ENCODE measurements at regions of chr12 and their contacts with region 1.

Region 1: DNA sequence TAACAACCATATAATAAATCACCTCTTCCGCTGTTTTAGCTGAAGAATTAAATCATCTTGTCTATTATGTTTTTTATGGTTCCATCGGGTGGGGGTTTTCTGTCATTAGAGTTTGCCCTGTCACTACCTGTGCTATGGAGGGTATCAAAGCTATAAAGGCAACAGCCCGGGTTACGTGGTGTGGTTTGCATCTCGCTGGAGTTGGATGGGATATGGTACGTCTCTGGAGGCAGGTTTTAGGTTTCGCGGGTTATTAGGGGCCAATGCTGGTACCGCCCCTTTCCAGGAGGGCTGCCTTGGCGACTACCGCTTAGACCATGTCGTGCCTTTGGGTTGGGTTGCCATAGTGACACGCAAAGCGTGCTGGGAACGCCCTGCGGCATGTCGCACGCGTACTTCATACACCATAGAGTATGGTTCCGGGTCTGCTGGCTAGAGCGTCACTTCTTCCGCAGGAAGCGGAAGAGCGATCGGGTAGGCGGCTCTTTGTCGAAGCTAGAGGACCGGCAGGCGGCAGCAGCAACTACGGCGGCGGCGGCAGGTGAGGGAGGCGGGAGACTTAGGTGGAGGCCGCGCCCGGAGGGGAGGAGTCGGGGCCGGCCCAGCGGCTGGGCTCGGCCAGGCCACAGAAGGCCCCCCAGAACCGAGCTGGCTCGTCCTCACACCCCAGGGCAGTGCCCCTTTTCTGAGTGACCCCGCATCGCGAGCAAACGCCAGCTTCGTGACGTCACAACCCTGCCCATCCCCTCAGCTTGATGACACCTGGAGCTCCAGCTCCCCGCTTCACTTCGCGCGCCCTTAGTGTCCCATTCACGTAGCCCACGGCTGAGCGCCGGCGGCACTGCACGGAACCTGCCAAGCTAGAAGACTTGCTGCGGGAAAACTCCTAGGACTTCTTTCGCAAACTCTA is at the start of gene ZC3H10:
- DNase-seq: peak; percentile 98
- ATAC-seq: peak; percentile 84
- H3K4me3 ChIP-seq: peak within 1 kb of the TSS; percentile 69 to 86 (median 74)
- H3K27ac ChIP-seq: peak within 1 kb of the TSS; percentile 93
- H3K4me1 ChIP-seq: peaks cover 51% of the 10 kb centered on the region
- H3K27me3 ChIP-seq: no peaks in the 10 kb centered on the region; a peak in 1 of 5 replicates
- CTCF ChIP-seq: peak; percentile 91
- EP300 ChIP-seq: peak in 1 of 2 experiments; percentile 73; a peak in 3 of 4 replicates
- POLR2A ChIP-seq: peak; percentile 99
- RAD21 ChIP-seq: peak; percentile 58
- total RNA-seq, gene ZC3H10: 1.9 and 2.3 TPM in 2 replicates

Region 2: DNA sequence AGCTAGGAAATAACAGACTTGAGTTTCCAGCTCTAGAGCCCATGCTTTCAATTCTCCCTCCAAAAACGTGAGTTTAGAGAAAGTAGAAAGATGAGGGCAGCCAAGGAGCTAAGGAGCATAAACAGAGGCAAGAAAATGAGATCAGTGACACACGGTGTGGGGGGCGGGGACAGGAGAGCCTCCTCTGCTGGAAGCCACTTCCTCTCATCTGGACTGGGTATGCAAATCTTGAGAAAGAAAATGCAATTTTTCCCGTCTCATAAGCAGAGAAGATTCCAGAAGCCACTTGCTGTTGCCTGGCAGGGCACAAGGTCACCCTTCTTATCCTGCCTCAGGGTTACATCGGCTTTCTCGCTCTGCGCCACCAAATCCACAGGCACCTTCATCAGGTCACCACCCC is 475.4 kb before region 1 on chr12:
- CTCF ChIA-PET with region 1: no interaction called
- POLR2A ChIA-PET with region 1: no interaction called
- in situ Hi-C with region 1: no loop called
- intact Hi-C with region 1: no loop called
- DNase-seq: no peak
- ATAC-seq: no peak
- H3K4me3 ChIP-seq: no peak overlapping the region
- H3K27ac ChIP-seq: no peak overlapping the region
- H3K4me1 ChIP-seq: no peaks in the 10 kb centered on the region
- H3K27me3 ChIP-seq: peaks cover 0 to 4% of the 10 kb centered on the region in 2 experiments; a peak in 1 of 5 replicates
- CTCF ChIP-seq: no peak
- EP300 ChIP-seq: no peak
- POLR2A ChIP-seq: no peak
- RAD21 ChIP-seq: no peak

Region 3: DNA sequence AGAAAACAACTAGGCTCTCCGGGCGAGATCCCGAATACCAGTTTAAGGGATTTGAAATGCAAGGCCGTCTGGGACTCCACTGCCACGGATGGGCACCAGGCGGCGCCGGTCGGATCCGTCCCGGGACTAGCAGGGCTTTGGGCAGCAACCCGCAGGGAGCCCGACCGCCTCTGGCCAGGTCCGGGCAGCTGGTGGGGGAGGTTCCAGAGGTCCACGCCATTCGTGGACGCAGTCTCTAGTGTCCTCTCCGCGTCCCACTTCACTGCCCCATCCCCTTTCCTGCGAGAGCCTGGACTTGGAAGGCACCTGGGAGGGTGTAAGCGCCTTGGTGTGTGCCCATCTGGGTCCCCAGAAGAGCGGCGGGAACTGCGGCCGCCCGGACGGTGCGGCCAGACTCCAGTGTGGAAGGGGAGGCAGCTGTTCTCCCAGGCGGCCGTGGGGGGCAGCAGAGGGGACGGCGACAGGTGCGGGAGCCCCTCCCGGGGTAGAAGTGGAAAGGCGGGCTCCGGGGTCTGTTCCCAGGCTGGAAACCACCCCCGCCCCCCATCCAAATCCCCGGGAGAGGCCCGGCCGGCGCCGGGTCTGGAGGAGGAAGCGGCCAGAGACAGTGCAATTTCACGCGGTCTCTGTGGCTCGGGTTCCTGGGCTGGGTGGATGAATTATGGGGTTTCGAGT is 38.9 kb before region 1 on chr12:
- CTCF ChIA-PET with region 1: interaction called, 4 read pairs
- POLR2A ChIA-PET with region 1: interaction called, 124 read pairs
- in situ Hi-C with region 1: no loop called
- intact Hi-C with region 1: loop called (anchors 1 kb)
- DNase-seq: peak; percentile 81
- ATAC-seq: peak; percentile 61
- H3K4me3 ChIP-seq: peak overlapping the region; percentile 89 to 96 (median 91)
- H3K27ac ChIP-seq: peak overlapping the region; percentile 99
- H3K4me1 ChIP-seq: peaks cover 49% of the 10 kb centered on the region
- H3K27me3 ChIP-seq: no peaks in the 10 kb centered on the region; a peak in 1 of 5 replicates
- CTCF ChIP-seq: peak; percentile 83
- EP300 ChIP-seq: 0 out of 4 replicates have a peak, but pooled peaks of 1 of the 2 experiments have one; percentile 22
- POLR2A ChIP-seq: peak; percentile 67 to 73; a peak in 3 of 4 replicates
- RAD21 ChIP-seq: peak; percentile 80

Region 4: GRCh38 chr12:56127888-56128669 is 10.0 kb after region 1 on chr12 and contains the start of gene ESYT1:
- CTCF ChIA-PET with region 1: no interaction called
- POLR2A ChIA-PET with region 1: interaction called, 58 read pairs
- in situ Hi-C with region 1: no loop called
- intact Hi-C with region 1: no loop called
- DNase-seq: peak; percentile 100
- ATAC-seq: peak; percentile 90
- H3K4me3 ChIP-seq: peak within 1 kb of the TSS; percentile 72 to 89 (median 83)
- H3K27ac ChIP-seq: peak within 1 kb of the TSS; percentile 65
- H3K4me1 ChIP-seq: peaks cover 61% of the 10 kb centered on the region
- H3K27me3 ChIP-seq: no peaks in the 10 kb centered on the region
- CTCF ChIP-seq: peak; percentile 42
- EP300 ChIP-seq: no peak
- POLR2A ChIP-seq: peak; percentile 90 to 96
- RAD21 ChIP-seq: 0 out of 2 replicates have a peak, but pooled peaks have one; percentile 11
- total RNA-seq, gene ESYT1: 30.1 and 66.9 TPM in 2 replicates

Region 5: GRCh38 chr12:56158029-56158925 is 40.2 kb after region 1 on chr12 and contains the start of gene MYL6:
- CTCF ChIA-PET with region 1: no interaction called
- POLR2A ChIA-PET with region 1: interaction called, 24 read pairs
- in situ Hi-C with region 1: loop called (anchors 5 kb)
- intact Hi-C with region 1: loop called (anchors 2 kb)
- DNase-seq: peak; percentile 96
- ATAC-seq: peak; percentile 84
- H3K4me3 ChIP-seq: peak within 1 kb of the TSS; percentile 92 to 99 (median 95)
- H3K27ac ChIP-seq: peak within 1 kb of the TSS; percentile 87
- H3K4me1 ChIP-seq: peaks cover 64% of the 10 kb centered on the region
- H3K27me3 ChIP-seq: no peaks in the 10 kb centered on the region; a peak in 1 of 5 replicates
- CTCF ChIP-seq: no peak
- EP300 ChIP-seq: no peak
- POLR2A ChIP-seq: peak; percentile 98 to 99
- RAD21 ChIP-seq: no peak
- total RNA-seq, gene MYL6: 1,192 and 1,778 TPM in 2 replicates

Region 6: DNA sequence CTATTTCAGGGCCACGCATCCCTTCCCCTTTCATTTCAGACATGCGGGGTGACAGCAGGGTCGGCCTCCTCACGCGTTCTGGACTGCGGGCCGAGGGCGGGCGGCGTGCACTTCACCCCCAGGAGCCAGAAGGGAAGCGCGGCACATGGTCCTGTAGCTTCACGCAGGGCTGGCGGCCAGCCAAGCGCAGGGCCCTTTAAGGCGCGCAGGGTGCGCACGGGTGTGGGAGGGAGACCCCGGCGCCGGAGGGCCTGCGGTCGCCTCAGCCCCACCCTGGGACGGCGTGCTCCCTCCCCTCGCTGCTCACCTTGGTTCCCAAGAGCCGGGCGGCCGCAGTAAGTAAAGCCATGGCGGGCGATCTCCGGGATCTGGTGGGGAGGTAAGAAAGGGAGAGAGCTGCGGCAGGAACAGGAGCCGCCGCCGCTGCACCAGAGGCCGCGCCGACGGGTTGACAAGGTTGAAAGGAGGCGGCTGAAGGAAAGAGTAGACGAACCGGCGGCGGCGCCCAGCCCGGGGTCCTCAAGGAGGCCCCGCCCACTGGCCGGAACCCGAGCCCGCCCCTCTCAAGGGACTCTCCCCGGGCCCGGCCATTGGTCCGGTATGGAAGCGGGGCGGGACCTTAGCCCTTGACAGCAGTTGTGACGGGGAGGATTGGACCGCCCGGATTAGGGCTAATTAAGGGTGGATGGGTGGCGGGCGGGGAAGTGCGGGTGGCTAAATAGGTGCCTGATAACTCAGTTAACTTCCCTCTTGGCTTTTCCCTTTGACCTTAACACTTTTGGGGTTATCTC is 182.0 kb after region 1 on chr12 and contains the start of gene CS:
- CTCF ChIA-PET with region 1: no interaction called
- POLR2A ChIA-PET with region 1: interaction called, 4 read pairs
- in situ Hi-C with region 1: no loop called
- intact Hi-C with region 1: loop called (anchors 2 kb)
- DNase-seq: peak; percentile 96
- ATAC-seq: peak; percentile 87
- H3K4me3 ChIP-seq: peak within 1 kb of the TSS; percentile 76 to 97 (median 94)
- H3K27ac ChIP-seq: peak within 1 kb of the TSS; percentile 96
- H3K4me1 ChIP-seq: peaks cover 65% of the 10 kb centered on the region
- H3K27me3 ChIP-seq: no peaks in the 10 kb centered on the region; a peak in 1 of 5 replicates
- CTCF ChIP-seq: 0 out of 2 replicates have a peak, but pooled peaks have one; percentile 7
- EP300 ChIP-seq: 0 out of 4 replicates have a peak, but pooled peaks of 1 of the 2 experiments have one; percentile 26
- POLR2A ChIP-seq: peak; percentile 54 to 70
- RAD21 ChIP-seq: peak; percentile 59
- total RNA-seq, gene CS: 175 and 243 TPM in 2 replicates